ENCODE measurements at regions of chr22 and their contacts with region 1.

Region 1: GRCh38 chr22:20965104-20965887 is 1.8 kb upstream of the AIFM3 start:
- DNase-seq: no peak
- H3K4me3 Mint-ChIP-seq: no peak overlapping the region
- H3K27ac Mint-ChIP-seq: no peak overlapping the region
- H3K4me1 Mint-ChIP-seq: peaks cover 11% of the 10 kb centered on the region
- H3K27me3 Mint-ChIP-seq: peaks cover 22% of the 10 kb centered on the region

Region 2: GRCh38 chr22:20916983-20917810 is 48.1 kb before region 1 on chr22 and contains the start of gene CRKL:
- intact Hi-C with region 1: loop called (anchors 5 kb)
- DNase-seq: peak; percentile 96
- H3K4me3 Mint-ChIP-seq: peak within 1 kb of the TSS; percentile 99
- H3K27ac Mint-ChIP-seq: peak within 1 kb of the TSS; percentile 88
- H3K4me1 Mint-ChIP-seq: peaks cover 34% of the 10 kb centered on the region
- H3K27me3 Mint-ChIP-seq: peaks cover 3% of the 10 kb centered on the region
- total RNA-seq, gene CRKL: 78.2 and 79.2 TPM in 2 replicates

Region 3: DNA sequence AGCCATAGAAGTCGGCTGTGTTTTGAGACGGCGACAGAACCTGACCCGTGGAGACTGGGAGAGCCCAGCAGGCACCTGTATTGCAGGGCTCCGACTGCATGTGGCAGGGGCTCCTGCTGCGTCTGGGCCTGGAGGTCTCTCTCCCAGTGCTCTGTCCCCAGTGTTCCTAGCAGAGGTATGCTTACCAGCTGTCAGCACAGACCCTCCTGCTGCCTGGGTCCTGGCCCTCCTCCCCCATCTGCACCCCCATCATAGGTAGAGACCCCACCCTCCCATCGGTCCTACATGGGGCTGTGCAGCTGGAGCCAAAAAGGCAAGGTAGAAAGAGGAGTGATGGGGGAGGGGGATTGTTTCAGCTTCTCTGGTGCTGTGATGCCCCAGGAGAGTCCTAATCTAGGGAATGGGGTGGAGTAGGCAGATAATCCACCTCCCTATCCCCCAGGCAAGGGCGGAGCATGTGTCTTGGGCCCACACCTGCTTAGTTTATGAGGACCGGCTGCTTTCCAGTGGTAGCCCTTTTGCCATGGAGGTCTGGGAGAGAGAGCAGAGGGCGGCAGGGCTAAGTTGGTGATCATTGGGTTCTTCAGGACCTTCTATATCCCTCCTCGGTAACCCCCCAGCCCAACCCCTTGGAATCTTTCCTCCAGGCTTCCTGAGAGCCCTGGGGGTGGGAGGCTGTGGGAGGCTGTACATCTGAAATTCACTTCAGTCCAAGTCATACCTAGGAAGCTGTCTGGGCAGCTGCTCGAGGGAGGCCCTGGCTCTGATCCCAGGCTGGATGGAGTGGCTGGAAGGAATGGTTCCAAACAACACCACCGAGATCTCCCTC is 61.7 kb after region 1 on chr22:
- intact Hi-C with region 1: no loop called
- DNase-seq: no peak
- H3K4me3 Mint-ChIP-seq: no peak overlapping the region
- H3K27ac Mint-ChIP-seq: no peak overlapping the region
- H3K4me1 Mint-ChIP-seq: peaks cover 7% of the 10 kb centered on the region
- H3K27me3 Mint-ChIP-seq: peaks cover 13% of the 10 kb centered on the region

Region 4: GRCh38 chr22:21102659-21103267 is 137.5 kb after region 1 on chr22:
- intact Hi-C with region 1: loop called (anchors 10 kb)
- DNase-seq: peak; percentile 61
- H3K4me3 Mint-ChIP-seq: no peak overlapping the region
- H3K27ac Mint-ChIP-seq: no peak overlapping the region
- H3K4me1 Mint-ChIP-seq: peaks cover 8% of the 10 kb centered on the region
- H3K27me3 Mint-ChIP-seq: peaks cover 32% of the 10 kb centered on the region

Measured in activated T-helper 1 cell treated with anti-CD3 and anti-CD28 coated beads, Interleukin-12 subunit alpha, Interleukin-12 subunit beta, Interleukin-2, Interleukin-4 antibody, amounts not matched to agents 30 ng/mL and 10 ng/mL and 1 ng/mL, durations not matched to agents 14 hours and 24 hours and 36 hours (primary cell).